ENCODE measurements at regions of chr2 and their contacts with region 1.

Region 1: GRCh38 chr2:6909431-6910385 is 7.5 kb upstream of the RNF144A start:
- DNase-seq: peak; percentile 61
- H3K4me3 Mint-ChIP-seq: peak overlapping the region; percentile 44
- H3K27ac Mint-ChIP-seq: peak overlapping the region; percentile 82
- H3K4me1 Mint-ChIP-seq: peaks cover 74% of the 10 kb centered on the region
- H3K27me3 Mint-ChIP-seq: no peaks in the 10 kb centered on the region

Region 2: GRCh38 chr2:6845312-6845711 is 64.4 kb before region 1 on chr2:
- intact Hi-C with region 1: no loop called
- DNase-seq: no peak
- H3K4me3 Mint-ChIP-seq: no peak overlapping the region
- H3K27ac Mint-ChIP-seq: no peak overlapping the region
- H3K4me1 Mint-ChIP-seq: peaks cover 10% of the 10 kb centered on the region
- H3K27me3 Mint-ChIP-seq: no peaks in the 10 kb centered on the region

Region 3: DNA sequence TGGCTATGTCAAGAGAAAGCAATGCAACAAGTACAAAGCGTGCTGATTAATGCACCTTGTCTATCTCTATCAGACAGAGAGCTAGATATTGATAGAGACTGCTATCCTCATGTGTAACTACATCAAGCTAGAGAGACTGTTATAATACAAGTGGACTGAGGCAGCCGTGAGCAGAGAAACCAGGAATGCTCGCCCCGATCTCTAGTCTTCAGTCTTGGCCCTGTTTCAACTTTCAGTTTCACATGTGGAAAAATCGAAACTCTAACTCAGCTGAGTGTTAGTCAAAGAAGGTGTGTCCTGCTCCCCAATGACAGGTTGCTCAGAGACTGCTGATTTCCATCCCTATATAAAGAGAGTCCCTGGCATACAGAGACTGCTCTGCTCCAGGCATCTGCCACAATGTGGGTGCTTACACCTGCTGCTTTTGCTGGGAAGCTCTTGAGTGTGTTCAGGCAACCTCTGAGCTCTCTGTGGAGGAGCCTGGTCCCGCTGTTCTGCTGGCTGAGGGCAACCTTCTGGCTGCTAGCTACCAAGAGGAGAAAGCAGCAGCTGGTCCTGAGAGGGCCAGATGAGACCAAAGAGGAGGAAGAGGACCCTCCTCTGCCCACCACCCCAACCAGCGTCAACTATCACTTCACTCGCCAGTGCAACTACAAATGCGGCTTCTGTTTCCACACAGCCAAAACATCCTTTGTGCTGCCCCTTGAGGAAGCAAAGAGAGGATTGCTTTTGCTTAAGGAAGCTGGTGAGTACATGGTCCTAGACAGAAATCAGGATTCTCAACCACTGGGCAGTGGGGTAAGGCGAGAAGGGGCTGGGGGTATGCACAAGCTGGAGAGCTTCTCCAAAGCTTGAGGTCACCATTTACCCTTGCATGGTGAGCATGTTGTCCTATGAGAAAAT is 32.1 kb before region 1 on chr2 and contains the start of gene RSAD2:
- intact Hi-C with region 1: loop called (anchors 2 kb)
- DNase-seq: peak; percentile 42
- H3K4me3 Mint-ChIP-seq: peak within 1 kb of the TSS; percentile 74
- H3K27ac Mint-ChIP-seq: peak within 1 kb of the TSS; percentile 21
- H3K4me1 Mint-ChIP-seq: peaks cover 80% of the 10 kb centered on the region
- H3K27me3 Mint-ChIP-seq: no peaks in the 10 kb centered on the region
- total RNA-seq, gene RSAD2: 2.0 and 2.2 TPM in 2 replicates

Region 4: GRCh38 chr2:6945087-6945813 is 35.5 kb after region 1 on chr2:
- intact Hi-C with region 1: loop called (anchors 1 kb)
- DNase-seq: no peak
- H3K4me3 Mint-ChIP-seq: peak overlapping the region; percentile 3
- H3K27ac Mint-ChIP-seq: peak overlapping the region; percentile 65
- H3K4me1 Mint-ChIP-seq: peaks cover 46% of the 10 kb centered on the region
- H3K27me3 Mint-ChIP-seq: no peaks in the 10 kb centered on the region

Measured in activated T-helper 2 cell treated with anti-CD3 and anti-CD28 coated beads, Interferon-gamma antibody, Interleukin-2, Interleukin-4, amounts not matched to agents 10 μg/mL and 5 μg/mL and 100 μg/mL, durations not matched to agents 14 hours and 24 hours and 36 hours (primary cell).